A673 (cell line): ENCODE measurements at regions of chr17 and their contacts with region 1.

Region 1: DNA sequence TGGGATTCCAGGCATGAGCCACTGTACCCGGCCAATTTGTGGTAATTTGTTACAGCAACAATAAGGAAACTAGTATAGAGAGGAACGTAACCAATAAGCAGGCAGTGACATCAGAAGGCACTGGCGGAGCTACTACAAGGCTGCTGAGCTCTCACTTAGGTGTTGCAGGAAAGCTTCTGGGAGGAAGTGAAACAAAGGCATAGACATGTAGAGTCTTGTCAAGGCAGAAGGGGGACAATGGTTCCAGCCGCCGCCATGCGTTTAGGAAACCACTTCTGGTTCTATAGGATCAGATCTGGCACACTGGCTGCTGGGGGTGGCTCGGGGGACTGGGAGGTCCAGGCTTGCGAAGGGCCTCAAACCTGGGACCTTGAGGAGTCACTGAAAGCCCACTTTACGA is 9.4 kb upstream of the CPSF4L start:
- DNase-seq: no peak
- H3K4me3 ChIP-seq: no peak overlapping the region
- H3K27ac ChIP-seq: no peak overlapping the region
- H3K4me1 ChIP-seq: no peaks in the 10 kb centered on the region
- H3K27me3 ChIP-seq: no peaks in the 10 kb centered on the region
- CTCF ChIP-seq: no peak

Region 2: GRCh38 chr17:73013816-73014663 is 257.0 kb before region 1 on chr17:
- CTCF ChIA-PET with region 1: no interaction called
- POLR2A ChIA-PET with region 1: no interaction called
- intact Hi-C with region 1: no loop called
- DNase-seq: peak; percentile 63
- H3K4me3 ChIP-seq: no peak overlapping the region
- H3K27ac ChIP-seq: no peak overlapping the region
- H3K4me1 ChIP-seq: no peaks in the 10 kb centered on the region
- H3K27me3 ChIP-seq: no peaks in the 10 kb centered on the region
- CTCF ChIP-seq: no peak

Region 3: DNA sequence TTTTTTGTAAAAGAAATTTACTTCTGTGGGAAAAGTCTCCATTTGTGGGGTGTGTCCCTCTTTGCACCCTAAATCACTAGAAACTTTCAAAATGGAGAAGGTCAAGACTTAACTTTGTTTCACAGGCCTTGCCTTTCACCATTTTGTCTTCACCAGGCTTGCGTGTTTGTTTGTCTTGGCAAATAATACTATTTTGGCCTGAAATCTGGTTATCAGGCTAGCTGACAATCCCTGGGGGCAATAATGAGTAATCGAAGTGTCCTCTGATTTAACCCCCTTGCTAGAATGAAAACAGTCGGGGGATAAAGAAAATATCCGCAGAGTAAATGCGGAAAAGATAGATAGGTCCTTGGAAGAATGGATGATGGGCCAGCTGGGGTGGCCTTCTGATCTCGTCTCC is 213.1 kb before region 1 on chr17:
- CTCF ChIA-PET with region 1: no interaction called
- POLR2A ChIA-PET with region 1: no interaction called
- intact Hi-C with region 1: no loop called
- DNase-seq: no peak
- H3K4me3 ChIP-seq: no peak overlapping the region
- H3K27ac ChIP-seq: no peak overlapping the region
- H3K4me1 ChIP-seq: no peaks in the 10 kb centered on the region
- H3K27me3 ChIP-seq: no peaks in the 10 kb centered on the region
- CTCF ChIP-seq: no peak

Region 4: DNA sequence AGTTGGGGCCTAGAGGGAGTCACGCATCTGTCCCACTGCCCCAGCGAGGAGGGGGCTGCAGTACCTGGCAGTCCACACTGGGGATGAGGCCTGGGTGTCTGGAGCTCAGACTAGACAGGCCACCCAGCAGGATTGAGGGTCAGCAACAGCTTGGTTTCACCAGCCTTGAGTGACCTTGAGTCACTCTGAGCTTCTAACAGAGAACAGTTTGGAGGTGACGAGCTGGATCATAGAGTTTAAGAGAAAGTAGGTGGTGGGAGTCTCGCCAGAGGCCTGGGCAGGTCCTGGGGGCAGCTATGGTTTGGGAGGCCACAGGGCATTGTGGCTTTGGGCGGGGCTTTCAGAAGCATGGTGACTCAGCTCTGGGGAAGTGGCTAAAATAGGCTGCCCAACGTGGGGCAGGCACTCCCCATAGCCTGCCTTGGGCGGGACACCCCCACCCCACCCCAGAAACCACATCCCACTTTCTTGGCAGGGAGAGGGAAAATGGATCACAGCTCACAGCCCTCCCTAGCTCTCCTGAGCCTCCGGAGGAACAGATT is 20.3 kb after region 1 on chr17:
- CTCF ChIA-PET with region 1: no interaction called
- POLR2A ChIA-PET with region 1: no interaction called
- intact Hi-C with region 1: no loop called
- DNase-seq: no peak
- H3K4me3 ChIP-seq: no peak overlapping the region
- H3K27ac ChIP-seq: no peak overlapping the region
- H3K4me1 ChIP-seq: no peaks in the 10 kb centered on the region
- H3K27me3 ChIP-seq: no peaks in the 10 kb centered on the region
- CTCF ChIP-seq: no peak

Region 5: DNA sequence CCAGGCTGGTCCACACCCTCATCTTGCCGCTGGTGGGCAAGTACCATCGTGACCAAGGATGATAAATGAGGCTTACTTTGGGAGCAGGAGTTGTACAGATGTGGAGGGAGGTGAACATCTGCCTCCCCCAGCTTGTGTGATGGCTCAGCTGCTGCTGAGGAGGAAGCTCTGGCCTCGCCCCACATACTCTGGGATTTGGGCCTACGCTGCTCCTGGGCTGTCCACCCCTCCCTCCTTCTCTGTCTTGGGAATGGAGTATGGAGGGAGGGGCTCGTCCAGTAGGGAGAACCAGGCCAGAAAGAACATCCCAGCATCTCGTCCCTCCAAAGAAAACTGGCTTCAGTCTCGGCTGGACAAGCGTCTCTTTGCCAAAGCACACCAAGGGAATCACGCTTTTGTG is 175.5 kb after region 1 on chr17:
- CTCF ChIA-PET with region 1: interaction called, 13 read pairs
- POLR2A ChIA-PET with region 1: no interaction called
- intact Hi-C with region 1: no loop called
- DNase-seq: no peak
- H3K4me3 ChIP-seq: no peak overlapping the region
- H3K27ac ChIP-seq: no peak overlapping the region
- H3K4me1 ChIP-seq: no peaks in the 10 kb centered on the region
- H3K27me3 ChIP-seq: no peaks in the 10 kb centered on the region
- CTCF ChIP-seq: no peak